ENCODE measurements at regions of chr3 and their contacts with region 1.

Region 1: GRCh38 chr3:69306239-69307185 is 79.4 kb downstream of the FRMD4B start:
- DNase-seq: peak; percentile 75
- ATAC-seq: peak; percentile 94
- H3K4me3 Mint-ChIP-seq: no peak overlapping the region
- H3K27ac Mint-ChIP-seq: peak overlapping the region; percentile 16
- H3K4me1 Mint-ChIP-seq: peaks cover 20% of the 10 kb centered on the region
- H3K27me3 Mint-ChIP-seq: no peaks in the 10 kb centered on the region
- CTCF ChIP-seq: peak; percentile 82

Region 2: GRCh38 chr3:68996356-68996995 is 310.0 kb before region 1 on chr3:
- CTCF ChIA-PET with region 1: no interaction called
- POLR2A ChIA-PET with region 1: no interaction called
- intact Hi-C with region 1: no loop called
- DNase-seq: no peak
- ATAC-seq: no peak
- H3K4me3 Mint-ChIP-seq: no peak overlapping the region
- H3K27ac Mint-ChIP-seq: peak overlapping the region; percentile 6
- H3K4me1 Mint-ChIP-seq: peaks cover 6% of the 10 kb centered on the region
- H3K27me3 Mint-ChIP-seq: no peaks in the 10 kb centered on the region
- CTCF ChIP-seq: no peak

Region 3: DNA sequence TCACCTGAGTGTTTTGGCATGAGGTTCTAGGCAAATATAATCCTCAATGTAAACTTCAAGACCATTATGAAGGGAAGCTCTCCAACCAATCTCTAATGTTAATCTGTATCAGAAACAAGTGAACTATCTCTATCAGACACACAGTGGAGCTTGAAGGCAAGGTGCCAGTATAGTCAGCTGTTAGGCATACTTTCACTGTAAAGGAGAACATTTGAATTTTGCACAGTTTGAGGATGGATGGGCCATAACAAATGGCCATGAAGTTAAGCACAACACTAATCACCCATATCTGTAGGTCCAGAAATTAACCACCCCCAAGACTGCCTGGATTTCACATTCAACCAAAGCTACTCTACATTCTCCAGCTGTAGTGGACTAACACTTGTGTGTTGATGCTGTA is 115.0 kb before region 1 on chr3:
- CTCF ChIA-PET with region 1: interaction called, 60 read pairs
- POLR2A ChIA-PET with region 1: interaction called, 3 read pairs
- intact Hi-C with region 1: no loop called
- DNase-seq: no peak
- ATAC-seq: no peak
- H3K4me3 Mint-ChIP-seq: no peak overlapping the region
- H3K27ac Mint-ChIP-seq: no peak overlapping the region
- H3K4me1 Mint-ChIP-seq: peaks cover 10% of the 10 kb centered on the region
- H3K27me3 Mint-ChIP-seq: no peaks in the 10 kb centered on the region
- CTCF ChIP-seq: no peak

Region 4: DNA sequence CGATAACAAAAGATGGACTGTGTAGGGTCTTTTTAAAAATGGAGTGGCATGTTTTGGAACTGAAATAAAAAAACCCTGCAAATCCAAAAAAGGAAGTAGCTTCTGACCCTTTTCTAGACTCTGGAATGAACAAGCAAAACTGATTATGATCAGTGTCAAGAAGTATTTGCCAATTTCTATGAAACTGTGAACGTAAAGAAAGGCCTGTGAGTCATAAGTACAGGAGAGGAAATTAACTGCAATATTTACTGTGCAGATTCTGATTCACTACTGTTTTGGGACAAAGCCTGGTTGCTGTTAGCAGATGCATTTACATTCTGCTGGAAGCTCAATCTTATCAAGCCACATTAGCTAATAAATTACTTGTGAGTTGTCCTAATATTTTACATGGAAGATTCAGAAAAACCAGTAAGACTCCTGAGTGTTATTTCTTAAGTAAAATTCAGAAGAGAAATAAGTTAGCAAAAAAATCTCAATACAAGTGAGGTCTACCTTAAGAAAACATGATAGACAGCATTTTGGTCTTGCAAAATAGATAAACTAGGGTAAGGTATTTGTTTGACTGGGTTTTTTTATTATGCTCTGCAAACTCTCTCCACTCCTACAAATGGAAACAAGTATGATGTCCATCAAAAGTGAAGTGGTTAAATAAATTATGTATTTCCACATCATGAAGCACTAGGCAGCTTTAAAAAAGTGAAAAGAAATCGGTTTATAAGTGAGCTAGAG is 93.9 kb before region 1 on chr3:
- CTCF ChIA-PET with region 1: interaction called, 12 read pairs
- POLR2A ChIA-PET with region 1: no interaction called
- intact Hi-C with region 1: no loop called
- DNase-seq: no peak
- ATAC-seq: peak; percentile 88
- H3K4me3 Mint-ChIP-seq: no peak overlapping the region
- H3K27ac Mint-ChIP-seq: peak overlapping the region; percentile 65
- H3K4me1 Mint-ChIP-seq: peaks cover 48% of the 10 kb centered on the region
- H3K27me3 Mint-ChIP-seq: no peaks in the 10 kb centered on the region
- CTCF ChIP-seq: no peak

Region 5: DNA sequence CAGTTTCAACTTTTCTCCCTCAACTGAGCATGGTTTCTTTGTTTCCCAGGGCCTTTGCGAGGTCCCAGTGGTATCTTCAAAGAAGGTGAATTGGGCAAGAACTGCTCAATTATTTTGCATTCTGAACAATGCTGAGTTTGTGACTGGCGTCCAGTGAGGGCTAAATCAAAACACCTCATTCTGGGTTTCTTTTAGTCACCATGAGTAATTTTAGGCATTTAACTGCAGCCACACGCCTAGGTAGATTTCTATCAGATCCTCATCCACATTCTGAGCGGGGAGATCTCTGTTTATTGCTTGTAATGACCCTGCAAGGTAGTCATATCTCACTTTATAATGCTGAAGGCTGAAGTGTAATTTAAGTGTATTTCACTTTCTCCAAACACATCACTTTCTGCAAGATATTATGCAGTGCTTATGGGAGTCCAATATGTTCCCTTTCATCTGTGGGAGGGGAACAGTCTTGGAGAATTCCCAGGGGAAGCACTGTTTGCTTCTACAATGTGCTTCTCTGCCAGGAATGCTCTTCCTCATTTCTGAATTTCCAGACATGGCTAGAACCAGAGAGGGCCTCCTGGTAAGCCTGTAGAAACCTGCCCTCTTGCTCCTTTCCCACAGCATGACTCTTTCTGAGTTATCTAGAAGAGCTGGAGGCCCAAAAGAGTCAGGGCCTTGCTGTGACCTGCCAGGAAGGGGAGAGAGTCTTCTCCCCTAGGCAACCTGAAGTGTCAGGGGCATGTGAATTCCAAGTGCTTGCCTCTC is 12.3 kb before region 1 on chr3:
- CTCF ChIA-PET with region 1: interaction called, 92 read pairs
- POLR2A ChIA-PET with region 1: interaction called, 4 read pairs
- intact Hi-C with region 1: no loop called
- DNase-seq: no peak
- ATAC-seq: peak; percentile 37
- H3K4me3 Mint-ChIP-seq: no peak overlapping the region
- H3K27ac Mint-ChIP-seq: no peak overlapping the region
- H3K4me1 Mint-ChIP-seq: peaks cover 5% of the 10 kb centered on the region
- H3K27me3 Mint-ChIP-seq: no peaks in the 10 kb centered on the region
- CTCF ChIP-seq: no peak

Region 6: DNA sequence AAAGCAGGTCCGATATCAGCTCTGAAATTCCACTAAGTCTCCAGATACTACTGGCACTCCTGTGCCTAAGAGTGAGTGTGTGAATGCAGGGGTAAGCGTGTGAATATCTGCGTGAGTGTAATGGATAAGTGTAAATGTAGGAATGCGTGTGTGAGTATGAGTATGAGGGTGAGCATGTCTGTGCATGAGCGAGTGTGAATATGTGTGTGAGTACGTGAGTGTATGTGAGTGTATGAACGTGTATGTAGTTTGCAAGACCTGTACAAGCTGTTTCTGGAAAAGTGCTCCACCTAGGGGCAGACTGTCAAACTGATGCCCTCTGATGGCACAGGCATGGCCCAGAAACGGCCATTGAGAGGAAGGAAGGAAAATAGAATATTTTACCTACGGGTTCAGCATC is 103.7 kb after region 1 on chr3:
- CTCF ChIA-PET with region 1: interaction called, 24 read pairs
- POLR2A ChIA-PET with region 1: no interaction called
- intact Hi-C with region 1: no loop called
- DNase-seq: peak; percentile 86
- ATAC-seq: peak; percentile 97
- H3K4me3 Mint-ChIP-seq: no peak overlapping the region
- H3K27ac Mint-ChIP-seq: no peak overlapping the region
- H3K4me1 Mint-ChIP-seq: peaks cover 5% of the 10 kb centered on the region
- H3K27me3 Mint-ChIP-seq: peaks cover 6% of the 10 kb centered on the region
- CTCF ChIP-seq: peak; percentile 95

Measured in activated CD8-positive, alpha-beta T cell treated with anti-CD3 and anti-CD28 coated beads for 36 hours (primary cell).